ENCODE measurements at regions of chr1 and their contacts with region 1.

Region 1: GRCh38 chr1:11654939-11655808 is 497 bp downstream of the FBXO44 start:
- DNase-seq: no peak
- H3K4me3 ChIP-seq: peak overlapping the region; percentile 79 to 95 (median 84)
- H3K27ac ChIP-seq: peak overlapping the region; percentile 51 to 83 (median 70)
- H3K4me1 ChIP-seq: peaks cover 21 to 36% (median 34%) of the 10 kb centered on the region in 4 donors
- H3K27me3 ChIP-seq: peaks cover 0 to 10% (median 1%) of the 10 kb centered on the region in 4 donors
- CTCF ChIP-seq: no peak
- EP300 ChIP-seq: no peak
- POLR2A ChIP-seq: no peak

Region 2: GRCh38 chr1:11805447-11806306 is 150.5 kb after region 1 on chr1 and contains the starts of genes CLCN6 and MTHFR:
- intact Hi-C with region 1: loop called (anchors 5 kb)
- DNase-seq: peak; percentile 100
- H3K4me3 ChIP-seq: peak within 1 kb of the TSS; percentile 66 to 90 (median 74)
- H3K27ac ChIP-seq: peak within 1 kb of the TSS; percentile 95 to 99 (median 98)
- H3K4me1 ChIP-seq: peaks cover 42 to 78% (median 75%) of the 10 kb centered on the region in 4 donors
- H3K27me3 ChIP-seq: no peaks in the 10 kb centered on the region
- CTCF ChIP-seq: peak in 2 of 3 experiments; percentile 2 to 8
- EP300 ChIP-seq: peak; percentile 14
- POLR2A ChIP-seq: peak; percentile 85
- total RNA-seq, gene CLCN6: 12.5 to 19.7 (median 15.5) TPM
- total RNA-seq, gene MTHFR: 23.4 to 38.6 (median 26.8) TPM

Region 3: GRCh38 chr1:11929849-11930248 is 274.7 kb after region 1 on chr1:
- intact Hi-C with region 1: no loop called
- DNase-seq: no peak
- H3K4me3 ChIP-seq: peak overlapping the region in 1 of 4 donors; percentile 1
- H3K27ac ChIP-seq: peak overlapping the region; percentile 69 to 80 (median 72)
- H3K4me1 ChIP-seq: peaks cover 45 to 64% (median 55%) of the 10 kb centered on the region in 4 donors
- H3K27me3 ChIP-seq: no peaks in the 10 kb centered on the region
- CTCF ChIP-seq: no peak
- EP300 ChIP-seq: no peak
- POLR2A ChIP-seq: no peak

Measured in esophagus muscularis mucosa (tissue), 4 donors.